ENCODE measurements at regions of chr6 and their contacts with region 1.

Region 1: DNA sequence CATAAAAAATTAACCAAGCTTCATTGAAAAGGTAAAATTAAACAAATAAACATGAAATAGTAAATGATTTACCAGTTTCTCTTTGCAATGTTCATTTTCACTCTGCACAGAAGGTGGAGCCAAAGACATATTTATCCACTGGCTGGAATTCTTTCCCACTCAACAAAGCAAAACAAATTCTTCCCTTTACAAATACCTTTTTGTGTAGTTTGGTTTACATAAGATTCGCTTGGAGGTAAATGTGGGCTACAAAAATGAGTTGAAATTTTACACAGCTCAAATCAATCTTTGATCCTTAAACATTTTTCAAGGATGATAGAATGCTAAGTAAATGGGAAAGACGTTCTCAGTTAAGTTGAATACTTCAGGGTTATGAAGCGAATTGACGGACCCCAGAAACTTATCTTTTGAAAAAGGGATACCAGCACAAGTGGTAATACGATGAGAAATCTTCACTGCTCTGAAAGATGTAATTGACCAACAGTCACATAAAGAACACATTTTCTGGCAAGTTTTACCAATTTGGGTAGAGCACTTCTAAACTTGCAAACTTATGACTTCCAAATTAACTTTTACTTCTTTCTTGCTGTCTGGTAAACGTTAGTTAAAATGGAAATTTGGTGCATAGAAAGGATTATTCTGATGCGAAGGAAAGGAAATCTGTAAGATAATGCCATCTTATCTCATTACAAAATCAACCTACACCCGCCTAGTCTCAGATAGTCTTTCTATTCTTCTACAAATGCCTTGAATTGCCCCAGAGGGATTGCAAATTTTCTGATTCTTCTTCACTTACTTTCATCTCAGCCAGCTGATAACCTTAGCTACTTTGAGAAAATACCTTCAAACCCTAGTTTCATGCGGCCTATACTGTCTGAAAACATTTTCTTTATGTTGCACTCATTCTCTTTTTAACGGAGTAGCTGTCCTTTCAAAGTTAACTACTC is 4.7 kb upstream of the GJA1 start:
- DNase-seq: no peak
- H3K4me3 ChIP-seq: peak overlapping the region in 1 of 4 donors; percentile 4
- H3K27ac ChIP-seq: peak overlapping the region in 3 of 4 donors; percentile 21 to 56 (median 55)
- H3K4me1 ChIP-seq: peaks cover 0 to 36% (median 31%) of the 10 kb centered on the region in 4 donors
- H3K27me3 ChIP-seq: no peaks in the 10 kb centered on the region
- CTCF ChIP-seq: peak; percentile 65 to 79 (median 72)
- EP300 ChIP-seq: no peak
- POLR2A ChIP-seq: no peak

Region 2: GRCh38 chr6:121032268-121033006 is 398.4 kb before region 1 on chr6:
- intact Hi-C with region 1: no loop called
- DNase-seq: no peak
- H3K4me3 ChIP-seq: no peak overlapping the region
- H3K27ac ChIP-seq: no peak overlapping the region
- H3K4me1 ChIP-seq: peaks cover 0 to 2% (median 0%) of the 10 kb centered on the region in 4 donors
- H3K27me3 ChIP-seq: no peaks in the 10 kb centered on the region
- CTCF ChIP-seq: no peak
- EP300 ChIP-seq: no peak
- POLR2A ChIP-seq: no peak

Region 3: DNA sequence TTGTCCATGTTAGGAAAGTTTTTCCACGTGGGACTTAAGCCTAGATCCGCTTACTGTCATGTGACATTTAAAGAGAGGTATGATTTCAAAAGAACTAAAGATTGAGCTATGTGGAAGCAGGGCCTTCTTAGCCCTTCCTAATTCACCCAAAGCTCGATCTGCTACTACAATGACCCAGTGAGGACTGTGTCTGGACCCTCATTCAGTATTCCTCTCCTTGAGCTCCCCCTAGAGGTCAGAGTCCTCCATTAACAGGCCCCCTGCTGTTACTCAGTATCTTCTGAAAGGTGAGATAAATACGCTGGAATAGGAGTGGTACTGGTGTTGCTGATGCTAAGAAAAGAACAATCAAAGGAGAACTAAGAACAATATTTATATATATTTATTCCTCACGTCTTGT is 418.7 kb after region 1 on chr6:
- intact Hi-C with region 1: loop called (anchors 5 kb)
- DNase-seq: no peak
- H3K4me3 ChIP-seq: no peak overlapping the region
- H3K27ac ChIP-seq: no peak overlapping the region
- H3K4me1 ChIP-seq: peaks cover 2 to 16% (median 7%) of the 10 kb centered on the region in 4 donors
- H3K27me3 ChIP-seq: no peaks in the 10 kb centered on the region
- CTCF ChIP-seq: peak; percentile 40 to 59 (median 48)
- EP300 ChIP-seq: no peak
- POLR2A ChIP-seq: no peak

Region 4: DNA sequence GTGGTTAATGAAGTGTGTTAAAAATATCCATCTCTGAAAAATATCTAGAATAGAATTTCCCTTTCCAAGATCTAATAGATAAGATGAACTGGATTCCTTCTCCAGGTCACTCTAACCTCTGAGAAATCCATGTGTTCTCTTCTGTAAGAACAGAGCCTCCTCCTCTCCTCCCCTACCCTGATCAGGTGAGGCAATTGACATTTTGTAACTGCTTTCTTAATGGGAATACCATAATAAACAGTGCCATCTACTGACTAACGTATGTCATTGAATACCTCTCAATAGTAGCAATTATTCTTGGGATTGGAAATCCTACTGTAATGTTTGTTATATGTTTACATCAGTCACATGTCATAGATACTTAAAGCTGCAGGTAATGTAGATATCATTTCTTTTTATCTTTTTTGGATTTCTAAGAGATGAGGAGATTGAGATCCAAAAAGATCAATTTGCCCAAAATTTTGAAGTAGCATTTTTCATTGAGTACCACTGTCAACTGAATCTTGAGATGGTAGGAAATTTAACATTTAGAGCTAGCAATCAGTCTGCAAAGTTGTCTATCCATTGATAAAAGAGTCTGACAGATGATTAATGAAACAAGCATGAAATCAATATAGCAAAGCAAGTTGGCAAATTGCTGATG is 602.9 kb after region 1 on chr6:
- intact Hi-C with region 1: loop called (anchors 2 kb)
- DNase-seq: no peak
- H3K4me3 ChIP-seq: no peak overlapping the region
- H3K27ac ChIP-seq: peak overlapping the region in 3 of 4 donors; percentile 15 to 51 (median 44)
- H3K4me1 ChIP-seq: peaks cover 3 to 15% (median 9%) of the 10 kb centered on the region in 4 donors
- H3K27me3 ChIP-seq: no peaks in the 10 kb centered on the region
- CTCF ChIP-seq: peak; percentile 56 to 70 (median 69)
- EP300 ChIP-seq: no peak
- POLR2A ChIP-seq: no peak

Region 5: DNA sequence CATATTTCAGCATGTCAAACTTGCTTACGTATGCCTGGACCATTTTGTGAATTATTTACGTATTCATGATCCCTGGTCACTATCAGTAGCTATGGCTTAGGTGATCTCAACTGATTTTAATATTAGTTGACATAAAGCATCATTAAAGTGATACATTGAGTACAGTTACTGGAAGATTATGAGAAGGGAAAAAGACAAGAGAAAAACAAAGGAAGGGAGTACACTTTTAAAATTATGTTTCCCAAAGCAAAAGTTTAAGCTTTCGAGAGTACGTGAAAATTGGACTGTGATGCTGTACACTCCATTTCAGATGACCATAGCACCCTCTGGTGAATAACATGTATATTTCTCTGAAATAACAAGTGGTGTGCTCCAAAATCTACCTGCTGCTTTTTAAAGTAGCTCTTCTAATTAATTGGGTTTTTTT is 753.6 kb after region 1 on chr6:
- intact Hi-C with region 1: loop called (anchors 2 kb)
- DNase-seq: no peak
- H3K4me3 ChIP-seq: peak overlapping the region; percentile 8 to 42 (median 24)
- H3K27ac ChIP-seq: peak overlapping the region in 3 of 4 donors; percentile 13 to 42 (median 31)
- H3K4me1 ChIP-seq: peaks cover 0 to 28% (median 12%) of the 10 kb centered on the region in 4 donors
- H3K27me3 ChIP-seq: no peaks in the 10 kb centered on the region
- CTCF ChIP-seq: peak; percentile 59 to 67 (median 64)
- EP300 ChIP-seq: no peak
- POLR2A ChIP-seq: no peak

Region 6: DNA sequence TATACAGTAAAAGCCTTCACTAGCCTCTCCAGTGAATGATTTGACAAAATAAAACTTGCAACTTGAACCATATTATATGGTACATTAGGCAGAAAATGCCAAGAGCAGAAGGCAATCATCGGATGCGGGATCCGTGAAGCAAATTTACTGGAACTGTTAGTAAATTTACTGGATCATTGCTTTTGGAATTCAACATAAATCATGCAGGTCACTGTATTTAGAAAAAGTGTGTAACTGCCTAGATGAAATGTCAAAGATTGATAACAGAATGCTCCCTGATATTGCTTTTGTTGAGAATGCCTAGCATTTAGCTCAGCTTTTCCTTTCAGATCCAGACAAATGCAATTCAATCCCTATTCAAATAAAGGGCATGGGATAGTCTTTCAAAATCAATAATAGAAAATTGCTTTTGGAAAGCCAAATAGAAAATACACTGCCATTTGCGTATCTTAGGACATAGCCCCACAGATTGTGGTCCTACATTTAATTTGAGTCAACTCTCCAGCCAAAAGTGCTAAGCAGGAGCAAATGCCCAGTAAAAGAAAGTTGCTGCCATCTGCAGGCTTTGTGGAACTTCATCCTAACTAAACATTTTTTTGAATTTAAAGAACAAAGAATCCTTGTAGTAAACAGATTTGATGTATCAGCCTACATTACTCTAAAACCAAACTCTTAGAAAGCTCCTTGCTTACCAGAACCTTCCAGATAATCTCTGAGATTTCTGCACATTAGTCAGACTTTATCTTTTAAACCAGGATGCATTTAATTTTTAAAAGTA is 859.2 kb after region 1 on chr6:
- intact Hi-C with region 1: loop called (anchors 5 kb)
- DNase-seq: no peak
- H3K4me3 ChIP-seq: no peak overlapping the region
- H3K27ac ChIP-seq: no peak overlapping the region
- H3K4me1 ChIP-seq: peaks cover 0 to 29% (median 5%) of the 10 kb centered on the region in 4 donors
- H3K27me3 ChIP-seq: no peaks in the 10 kb centered on the region
- CTCF ChIP-seq: peak; percentile 37 to 40 (median 39)
- EP300 ChIP-seq: no peak
- POLR2A ChIP-seq: no peak

Measured in esophagus muscularis mucosa (tissue), 4 donors.